Heart right ventricle (tissue), 16 donors: ENCODE measurements at regions of chr13 and their contacts with region 1.

Region 1: GRCh38 chr13:33228648-33229445 is 56.7 kb downstream of the STARD13 start:
- DNase-seq: no peak
- ATAC-seq: peak in 6 of 8 donors; percentile 43 to 67 (median 52)
- H3K4me3 ChIP-seq: peak overlapping the region in 1 of 10 donors; percentile 5
- H3K27ac ChIP-seq: peak overlapping the region; percentile 28 to 82 (median 73)
- H3K4me1 ChIP-seq: peaks cover 2 to 76% (median 61%) of the 10 kb centered on the region in 9 donors
- H3K27me3 ChIP-seq: no peaks in the 10 kb centered on the region
- CTCF ChIP-seq: peak; percentile 88 to 94 (median 90)

Region 2: DNA sequence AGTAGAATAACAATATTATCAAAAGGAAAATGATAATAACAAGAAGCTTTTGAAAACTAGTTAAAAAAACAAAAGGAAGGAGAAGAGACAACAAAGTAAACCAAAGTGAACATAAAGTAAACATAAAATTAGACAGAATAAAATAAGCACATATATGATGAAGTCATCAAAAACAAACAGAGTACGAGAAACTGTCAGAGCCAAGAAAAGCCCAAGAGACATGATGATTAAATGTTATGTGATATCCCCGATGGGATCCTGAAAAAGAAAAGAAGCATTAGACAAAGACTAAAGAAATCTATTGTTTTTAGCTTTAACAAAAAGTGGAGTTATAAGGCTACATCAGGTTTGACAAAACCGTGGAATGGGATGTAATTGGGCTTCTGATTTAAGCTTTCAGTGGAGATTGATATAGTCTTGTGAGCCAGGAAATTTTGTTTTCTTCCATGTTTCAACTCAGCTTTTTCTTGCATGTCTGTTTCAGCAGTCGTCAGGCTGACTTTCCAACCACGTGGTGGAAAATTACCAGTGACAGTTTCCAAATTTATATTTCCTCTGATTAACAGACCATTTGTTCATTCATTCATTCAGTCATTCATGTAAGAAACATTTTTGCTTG is 147.8 kb before region 1 on chr13:
- intact Hi-C with region 1: no loop called
- DNase-seq: no peak
- ATAC-seq: no peak
- H3K4me3 ChIP-seq: no peak overlapping the region
- H3K27ac ChIP-seq: no peak overlapping the region
- H3K4me1 ChIP-seq: peaks cover 0 to 11% (median 0%) of the 10 kb centered on the region in 9 donors
- H3K27me3 ChIP-seq: no peaks in the 10 kb centered on the region
- CTCF ChIP-seq: no peak

Region 3: GRCh38 chr13:33285420-33286124 is 56.7 kb after region 1 on chr13 and contains the start of gene STARD13:
- intact Hi-C with region 1: loop called in 6 of 10 experiments (anchors 2 to 10 kb)
- DNase-seq: peak; percentile 89 to 97
- ATAC-seq: peak; percentile 95 to 97 (median 96)
- H3K4me3 ChIP-seq: peak within 1 kb of the TSS; percentile 59 to 84 (median 72)
- H3K27ac ChIP-seq: peak within 1 kb of the TSS; percentile 84 to 98 (median 95)
- H3K4me1 ChIP-seq: peaks cover 5 to 60% (median 47%) of the 10 kb centered on the region in 9 donors
- H3K27me3 ChIP-seq: no peaks in the 10 kb centered on the region
- CTCF ChIP-seq: peak; percentile 15 to 69 (median 40)
- total RNA-seq, gene STARD13: 18.2 to 38.3 (median 28.5) TPM

Region 4: GRCh38 chr13:33349986-33350826 is 121.4 kb after region 1 on chr13:
- intact Hi-C with region 1: loop called in 1 of 10 experiments (anchors 5 kb)
- DNase-seq: peak; percentile 61 to 68
- ATAC-seq: peak; percentile 66 to 93 (median 78)
- H3K4me3 ChIP-seq: peak overlapping the region; percentile 59 to 96 (median 82)
- H3K27ac ChIP-seq: peak overlapping the region; percentile 61 to 96 (median 88)
- H3K4me1 ChIP-seq: peaks cover 0 to 61% (median 27%) of the 10 kb centered on the region in 9 donors
- H3K27me3 ChIP-seq: peaks cover 0 to 11% (median 0%) of the 10 kb centered on the region in 7 donors
- CTCF ChIP-seq: no peak

Region 5: DNA sequence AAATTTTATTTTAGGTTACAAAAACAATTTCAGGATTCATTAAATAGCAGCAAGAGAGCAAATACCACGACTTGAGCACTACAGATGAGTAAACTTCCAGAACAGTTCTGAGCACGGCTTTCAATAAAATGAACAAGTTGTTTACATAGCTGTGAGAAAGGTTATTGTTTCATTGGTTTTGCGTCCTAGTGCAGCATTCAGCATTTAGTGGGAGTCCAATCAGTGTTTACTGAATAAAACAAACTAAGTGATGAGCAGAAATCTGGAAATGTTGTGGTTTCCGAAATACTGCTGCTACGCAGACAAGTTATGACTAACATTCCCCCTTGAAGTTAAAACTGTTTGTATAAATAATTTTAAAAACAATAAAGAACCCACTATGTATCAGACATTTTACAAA is 308.2 kb after region 1 on chr13:
- intact Hi-C with region 1: loop called in 9 of 10 experiments (anchors 1 to 10 kb)
- DNase-seq: no peak
- ATAC-seq: no peak
- H3K4me3 ChIP-seq: no peak overlapping the region
- H3K27ac ChIP-seq: peak overlapping the region in 5 of 10 donors; percentile 0 to 39 (median 27)
- H3K4me1 ChIP-seq: peaks cover 2 to 44% (median 18%) of the 10 kb centered on the region in 9 donors
- H3K27me3 ChIP-seq: no peaks in the 10 kb centered on the region
- CTCF ChIP-seq: no peak

Region 6: DNA sequence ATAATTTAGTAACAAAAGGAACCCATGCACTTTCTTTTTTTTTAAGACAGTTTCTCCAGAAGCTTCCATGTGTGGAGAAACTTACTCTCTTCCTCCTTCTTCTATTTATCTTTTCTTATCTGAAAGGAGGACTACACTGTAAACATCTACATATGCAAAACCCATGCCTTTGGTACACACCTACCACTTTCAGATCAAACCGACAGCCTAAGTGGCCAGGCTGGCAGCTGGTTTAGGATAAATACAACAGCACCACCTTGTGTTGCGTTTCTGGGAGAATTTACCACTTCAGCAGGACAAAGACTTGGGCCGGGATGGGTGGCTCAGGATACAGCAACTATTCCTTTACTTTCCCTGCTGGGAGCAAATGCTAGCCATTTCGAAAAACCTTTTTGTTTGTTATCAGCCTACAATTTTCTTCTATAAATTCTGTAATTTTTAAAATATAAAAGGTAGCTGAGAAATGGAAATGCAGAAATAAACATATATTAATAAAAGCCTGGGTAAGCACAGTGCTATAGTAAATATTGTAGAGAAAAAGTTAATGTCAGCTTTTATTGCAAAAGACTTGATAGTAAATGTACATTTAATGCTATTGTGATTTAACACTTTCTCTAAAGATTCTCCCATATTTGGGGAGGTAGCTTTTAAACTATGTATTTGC is 495.1 kb after region 1 on chr13:
- intact Hi-C with region 1: loop called in 6 of 10 experiments (anchors 10 kb)
- DNase-seq: peak; percentile 27 to 86
- ATAC-seq: peak; percentile 83 to 94 (median 88)
- H3K4me3 ChIP-seq: no peak overlapping the region
- H3K27ac ChIP-seq: peak overlapping the region in 7 of 10 donors; percentile 62 to 84 (median 77)
- H3K4me1 ChIP-seq: peaks cover 6 to 55% (median 36%) of the 10 kb centered on the region in 9 donors
- H3K27me3 ChIP-seq: no peaks in the 10 kb centered on the region
- CTCF ChIP-seq: peak; percentile 41 to 90 (median 78)